ENCODE measurements at regions of chr21 and their contacts with region 1.

Region 1: GRCh38 chr21:39153373-39153772 is 29.9 kb downstream of the PSMG1 start:
- DNase-seq: no peak
- ATAC-seq: peak; percentile 77
- H3K4me3 ChIP-seq: no peak overlapping the region
- H3K27ac ChIP-seq: no peak overlapping the region
- H3K4me1 ChIP-seq: no peaks in the 10 kb centered on the region; the same call in 1 of the 2 replicates
- H3K27me3 ChIP-seq: peaks cover 16% of the 10 kb centered on the region
- CTCF ChIP-seq: peak; percentile 30; the same call in 1 of the 2 replicates
- POLR2A ChIP-seq: no peak
- RAD21 ChIP-seq: peak; percentile 19; the same call in 1 of the 2 replicates

Region 2: GRCh38 chr21:38380481-38381137 is 772.8 kb before region 1 on chr21:
- CTCF ChIA-PET with region 1: no interaction called
- POLR2A ChIA-PET with region 1: no interaction called
- dilution Hi-C with region 1: no loop called
- in situ Hi-C with region 1: loop called (anchors 25 kb)
- intact Hi-C with region 1: no loop called
- DNase-seq: peak; percentile 8
- ATAC-seq: peak; percentile 68
- H3K4me3 ChIP-seq: no peak overlapping the region
- H3K27ac ChIP-seq: no peak overlapping the region
- H3K4me1 ChIP-seq: no peaks in the 10 kb centered on the region
- H3K27me3 ChIP-seq: peaks cover 20% of the 10 kb centered on the region
- CTCF ChIP-seq: peak; percentile 32; the same call in 1 of the 2 replicates
- POLR2A ChIP-seq: no peak
- RAD21 ChIP-seq: no peak

Region 3: DNA sequence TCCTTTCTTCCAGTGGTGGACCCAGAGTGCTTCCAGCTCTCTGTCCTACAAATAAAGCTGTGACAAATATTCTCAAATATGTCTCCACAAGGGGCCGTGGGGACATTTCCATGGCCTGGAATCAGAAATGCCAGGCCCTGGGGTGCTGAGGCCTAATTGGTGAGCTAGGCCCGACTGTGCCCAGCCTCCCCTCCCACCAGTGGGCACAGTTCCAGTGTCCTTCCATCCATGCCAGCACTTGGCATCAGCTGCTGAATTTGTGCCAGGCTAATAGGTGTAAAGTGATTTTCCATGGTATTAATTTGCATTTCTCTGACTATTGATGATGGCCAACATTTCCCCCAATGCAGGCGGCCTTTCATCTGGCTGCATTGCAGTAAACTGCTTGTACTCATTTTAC is 410.8 kb after region 1 on chr21:
- CTCF ChIA-PET with region 1: no interaction called
- POLR2A ChIA-PET with region 1: no interaction called
- dilution Hi-C with region 1: no loop called
- in situ Hi-C with region 1: no loop called
- intact Hi-C with region 1: no loop called
- DNase-seq: no peak
- ATAC-seq: no peak
- H3K4me3 ChIP-seq: no peak overlapping the region
- H3K27ac ChIP-seq: no peak overlapping the region
- H3K4me1 ChIP-seq: no peaks in the 10 kb centered on the region
- H3K27me3 ChIP-seq: no peaks in the 10 kb centered on the region
- CTCF ChIP-seq: no peak
- POLR2A ChIP-seq: no peak
- RAD21 ChIP-seq: no peak